ENCODE measurements at regions of chrX and their contacts with region 1.

Region 1: GRCh38 chrX:41084044-41084892 is 977 bp upstream of the USP9X start:
- DNase-seq: peak; percentile 85
- H3K4me3 Mint-ChIP-seq: peak overlapping the region; percentile 90
- H3K27ac Mint-ChIP-seq: peak overlapping the region; percentile 99
- H3K4me1 Mint-ChIP-seq: peaks cover 12% of the 10 kb centered on the region
- H3K27me3 Mint-ChIP-seq: no peaks in the 10 kb centered on the region

Region 2: GRCh38 chrX:40169193-40170101 is 914.8 kb before region 1 on chrX:
- intact Hi-C with region 1: loop called (anchors 10 kb)
- DNase-seq: peak; percentile 73
- H3K4me3 Mint-ChIP-seq: peak overlapping the region; percentile 88
- H3K27ac Mint-ChIP-seq: peak overlapping the region; percentile 96
- H3K4me1 Mint-ChIP-seq: peaks cover 62% of the 10 kb centered on the region
- H3K27me3 Mint-ChIP-seq: no peaks in the 10 kb centered on the region

Region 3: GRCh38 chrX:40580537-40581335 is 503.5 kb before region 1 on chrX and contains the start of gene ATP6AP2:
- intact Hi-C with region 1: loop called (anchors 10 kb)
- DNase-seq: peak; percentile 85
- H3K4me3 Mint-ChIP-seq: peak within 1 kb of the TSS; percentile 94
- H3K27ac Mint-ChIP-seq: peak within 1 kb of the TSS; percentile 97
- H3K4me1 Mint-ChIP-seq: peaks cover 17% of the 10 kb centered on the region
- H3K27me3 Mint-ChIP-seq: no peaks in the 10 kb centered on the region
- total RNA-seq, gene ATP6AP2: 65.4 and 67.1 TPM in 2 replicates

Region 4: DNA sequence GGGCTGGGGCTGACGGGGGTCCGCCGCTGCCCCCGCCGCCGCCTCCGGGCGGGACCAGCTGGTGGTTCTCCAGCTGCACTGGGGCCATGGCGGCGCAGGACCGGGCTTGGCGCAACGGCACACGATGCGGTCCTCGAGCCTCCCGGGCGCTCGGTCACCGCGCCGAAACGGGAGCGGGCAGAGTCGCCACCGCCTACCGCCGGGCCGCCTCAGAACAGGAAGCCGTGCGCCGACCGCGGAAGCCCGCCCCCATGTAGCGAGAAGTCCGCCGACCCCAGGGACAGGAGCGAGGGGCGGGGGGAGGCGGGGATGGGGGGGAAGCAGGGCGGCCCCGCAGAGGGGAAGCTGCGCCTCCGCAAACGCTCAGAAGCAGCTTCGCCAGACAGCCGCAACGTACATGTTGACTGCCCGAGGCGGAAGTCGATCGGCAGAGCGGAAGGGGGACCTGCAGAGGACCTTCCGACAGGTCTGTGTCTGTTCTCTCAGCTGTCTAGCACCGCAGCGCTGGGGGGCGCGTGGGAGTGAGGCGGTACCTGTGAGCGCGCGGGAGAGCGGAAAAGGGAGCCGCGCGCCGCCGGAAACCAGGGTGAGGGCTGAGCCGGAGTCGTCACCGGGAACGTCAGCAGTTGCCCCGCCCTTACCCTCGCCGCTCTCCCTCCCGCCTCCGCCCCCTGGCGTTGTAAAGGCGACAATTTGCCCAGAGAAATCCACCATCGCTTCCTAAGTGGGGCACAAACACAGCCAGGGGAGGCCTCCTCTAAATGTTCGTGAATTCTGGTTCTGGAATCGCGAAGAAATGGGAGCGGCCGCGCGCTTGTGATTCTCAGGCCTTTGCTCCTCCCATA is 348.7 kb before region 1 on chrX and contains the start of gene MED14:
- intact Hi-C with region 1: loop called (anchors 1 kb)
- DNase-seq: peak; percentile 82
- H3K4me3 Mint-ChIP-seq: peak within 1 kb of the TSS; percentile 87
- H3K27ac Mint-ChIP-seq: peak within 1 kb of the TSS; percentile 90
- H3K4me1 Mint-ChIP-seq: peaks cover 30% of the 10 kb centered on the region
- H3K27me3 Mint-ChIP-seq: no peaks in the 10 kb centered on the region
- total RNA-seq, gene MED14: 36.4 and 40.9 TPM in 2 replicates

Region 5: GRCh38 chrX:40933132-40933705 is 151.0 kb before region 1 on chrX:
- intact Hi-C with region 1: loop called (anchors 1 kb)
- DNase-seq: peak; percentile 2
- H3K4me3 Mint-ChIP-seq: peak overlapping the region; percentile 67
- H3K27ac Mint-ChIP-seq: peak overlapping the region; percentile 95
- H3K4me1 Mint-ChIP-seq: peaks cover 15% of the 10 kb centered on the region
- H3K27me3 Mint-ChIP-seq: peaks cover 1% of the 10 kb centered on the region

Region 6: GRCh38 chrX:41010188-41010846 is 74.0 kb before region 1 on chrX:
- intact Hi-C with region 1: loop called (anchors 1 kb)
- DNase-seq: peak; percentile 53
- H3K4me3 Mint-ChIP-seq: peak overlapping the region; percentile 76
- H3K27ac Mint-ChIP-seq: peak overlapping the region; percentile 86
- H3K4me1 Mint-ChIP-seq: peaks cover 24% of the 10 kb centered on the region
- H3K27me3 Mint-ChIP-seq: no peaks in the 10 kb centered on the region

Region 7: DNA sequence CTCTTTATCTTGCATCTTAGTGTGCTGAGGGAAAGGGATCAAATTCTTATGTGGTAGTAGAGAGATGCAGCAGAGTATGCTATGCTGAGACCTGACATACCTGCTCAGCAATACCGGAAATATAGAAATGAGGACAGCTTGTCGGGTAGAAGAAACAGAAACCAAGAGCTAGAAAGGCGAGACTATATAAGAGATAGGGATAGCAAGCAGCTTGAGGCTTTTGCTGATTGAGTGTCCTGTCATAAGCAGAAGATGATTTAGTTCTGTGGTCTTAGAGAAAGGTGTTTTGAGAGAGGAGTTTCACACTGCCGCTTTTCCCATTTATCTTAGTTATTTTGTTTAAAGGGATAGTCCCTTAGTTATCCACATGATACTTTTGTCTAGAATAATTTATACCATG is 32.7 kb after region 1 on chrX:
- intact Hi-C with region 1: loop called (anchors 1 kb)
- DNase-seq: peak; percentile 11
- H3K4me3 Mint-ChIP-seq: peak overlapping the region; percentile 66
- H3K27ac Mint-ChIP-seq: peak overlapping the region; percentile 79
- H3K4me1 Mint-ChIP-seq: peaks cover 61% of the 10 kb centered on the region
- H3K27me3 Mint-ChIP-seq: no peaks in the 10 kb centered on the region

Measured in activated T-helper 1 cell treated with anti-CD3 and anti-CD28 coated beads, Interleukin-12 subunit alpha, Interleukin-12 subunit beta, Interleukin-2, Interleukin-4 antibody, amounts not matched to agents 30 ng/mL and 10 ng/mL and 1 ng/mL, durations not matched to agents 14 hours and 24 hours and 36 hours (primary cell).